Activated CD4-positive, alpha-beta T cell treated with anti-CD3 and anti-CD28 coated beads, Interleukin-2, amount 10 ng/mL, durations not matched to agents 24 days and 14 days (primary cell): ENCODE measurements at regions of chr5 and their contacts with region 1.

Region 1: DNA sequence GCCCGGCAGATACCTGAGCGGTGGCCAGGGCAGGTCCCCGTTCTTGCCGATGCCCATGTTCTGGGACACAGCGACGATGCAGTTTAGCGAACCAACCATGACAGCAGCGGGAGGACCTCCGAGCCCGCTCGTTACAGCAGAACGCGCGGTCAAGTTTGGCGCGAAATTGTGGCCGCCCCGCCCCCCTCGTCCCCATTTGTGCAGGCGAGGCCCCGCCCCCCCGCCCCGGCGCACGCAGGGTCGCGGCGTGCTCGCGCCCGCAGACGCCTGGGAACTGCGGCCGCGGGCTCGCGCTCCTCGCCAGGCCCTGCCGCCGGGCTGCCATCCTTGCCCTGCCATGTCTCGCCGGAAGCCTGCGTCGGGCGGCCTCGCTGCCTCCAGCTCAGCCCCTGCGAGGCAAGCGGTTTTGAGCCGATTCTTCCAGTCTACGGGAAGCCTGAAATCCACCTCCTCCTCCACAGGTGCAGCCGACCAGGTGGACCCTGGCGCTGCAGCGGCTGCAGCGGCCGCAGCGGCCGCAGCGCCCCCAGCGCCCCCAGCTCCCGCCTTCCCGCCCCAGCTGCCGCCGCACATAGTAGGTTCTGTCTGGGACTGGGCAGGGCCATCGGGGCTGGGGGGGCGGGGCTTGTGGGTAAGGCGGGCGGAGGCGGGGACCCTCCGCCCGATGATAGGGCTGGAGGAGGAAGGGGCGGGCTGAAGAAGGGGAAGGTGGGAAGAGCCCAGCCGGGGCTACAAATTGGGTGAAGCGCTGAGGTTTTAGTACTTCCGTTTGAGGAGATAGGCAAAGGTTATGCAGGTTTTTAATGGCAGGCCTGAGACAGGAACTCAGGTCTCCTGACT is at the starts of genes DHFR and MSH3:
- DNase-seq: peak; percentile 96
- H3K4me3 Mint-ChIP-seq: peak within 1 kb of the TSS; percentile 84
- H3K27ac Mint-ChIP-seq: peak within 1 kb of the TSS; percentile 93
- H3K4me1 Mint-ChIP-seq: peaks cover 23% of the 10 kb centered on the region
- H3K27me3 Mint-ChIP-seq: no peaks in the 10 kb centered on the region
- total RNA-seq, gene DHFR: 66.5 and 73.4 TPM in 2 replicates
- total RNA-seq, gene MSH3: 21.0 and 21.1 TPM in 2 replicates

Region 2: DNA sequence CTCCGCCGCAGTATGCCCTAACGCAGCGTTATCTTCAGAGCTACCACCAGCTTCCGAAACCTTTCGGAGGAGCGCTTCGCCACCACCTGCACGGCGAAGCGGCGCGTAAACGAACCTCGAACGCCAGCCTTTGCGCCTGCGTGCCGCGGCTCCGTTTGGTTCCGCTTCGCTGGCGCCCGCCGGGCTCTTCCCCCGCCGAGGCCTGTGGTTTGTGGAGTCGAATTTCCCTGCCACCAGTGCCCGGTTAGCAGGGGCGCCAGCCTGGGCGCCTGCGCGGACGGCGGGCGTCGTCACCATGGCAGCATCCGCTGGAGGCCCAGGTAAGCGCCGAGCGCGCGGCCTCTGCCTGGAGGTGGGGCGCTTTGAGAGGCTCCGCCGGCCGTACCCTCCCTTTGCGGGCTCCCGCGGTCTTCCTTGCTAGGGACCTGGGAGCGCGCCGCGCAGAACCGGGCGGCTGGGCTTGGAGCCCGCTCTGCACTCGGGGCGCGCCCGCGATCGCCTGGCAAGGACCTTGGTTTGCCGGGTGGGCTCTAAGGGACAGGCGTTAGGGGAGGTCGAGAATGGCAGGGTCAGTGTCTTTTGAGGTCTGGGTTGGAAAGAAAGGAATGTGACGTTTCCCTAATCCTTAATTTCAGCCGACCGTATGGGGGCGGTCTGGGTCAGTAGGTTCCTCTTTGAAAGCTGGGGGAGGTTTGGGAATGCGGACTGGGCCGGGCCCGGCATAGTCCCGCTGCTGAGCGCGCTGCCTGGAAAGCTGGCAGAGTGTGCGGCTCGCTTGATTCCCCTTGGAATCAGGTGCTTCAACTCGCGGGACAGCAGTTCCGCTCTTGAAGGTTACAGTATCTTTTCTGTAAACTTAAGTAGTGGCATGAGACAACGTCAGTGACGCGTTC is 166.5 kb before region 1 on chr5 and contains the start of gene FAM151B:
- intact Hi-C with region 1: loop called (anchors 10 kb)
- DNase-seq: peak; percentile 89
- H3K4me3 Mint-ChIP-seq: peak within 1 kb of the TSS; percentile 81
- H3K27ac Mint-ChIP-seq: no peak within 1 kb of the TSS
- H3K4me1 Mint-ChIP-seq: peaks cover 19% of the 10 kb centered on the region
- H3K27me3 Mint-ChIP-seq: peaks cover 33% of the 10 kb centered on the region
- total RNA-seq, gene FAM151B: 0.23 TPM in 1 of 2 replicates, not detected in the other

Region 3: GRCh38 chr5:80629281-80629680 is 25.3 kb before region 1 on chr5:
- intact Hi-C with region 1: no loop called
- DNase-seq: no peak
- H3K4me3 Mint-ChIP-seq: no peak overlapping the region
- H3K27ac Mint-ChIP-seq: no peak overlapping the region
- H3K4me1 Mint-ChIP-seq: peaks cover 5% of the 10 kb centered on the region
- H3K27me3 Mint-ChIP-seq: no peaks in the 10 kb centered on the region

Region 4: DNA sequence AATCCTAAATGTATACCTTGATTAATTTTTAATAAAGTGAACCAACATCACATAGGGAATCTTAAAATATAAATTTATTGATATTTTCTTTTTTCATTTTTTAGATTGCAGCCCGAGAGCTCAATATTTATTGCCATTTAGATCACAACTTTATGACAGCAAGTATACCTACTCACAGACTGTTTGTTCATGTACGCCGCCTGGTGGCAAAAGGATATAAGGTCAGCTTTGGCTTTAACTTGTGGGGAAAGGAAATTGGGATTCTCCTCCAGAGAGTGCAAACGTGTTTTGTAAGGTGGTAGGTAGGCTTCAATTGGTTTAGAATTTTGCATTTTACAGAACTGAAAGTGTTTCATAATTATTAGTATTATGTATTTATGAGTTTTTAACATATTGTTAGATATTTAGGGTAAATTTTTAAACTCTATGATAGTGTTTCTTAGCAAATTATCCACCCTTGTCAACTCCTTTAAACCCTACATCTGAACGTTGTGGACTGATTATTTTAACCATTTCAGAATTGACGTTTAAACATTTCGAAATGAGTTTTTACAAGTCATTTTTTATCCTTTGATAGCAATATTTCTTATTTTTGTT is 17.6 kb after region 1 on chr5:
- intact Hi-C with region 1: no loop called
- DNase-seq: peak; percentile 89
- H3K4me3 Mint-ChIP-seq: no peak overlapping the region
- H3K27ac Mint-ChIP-seq: no peak overlapping the region
- H3K4me1 Mint-ChIP-seq: peaks cover 10% of the 10 kb centered on the region
- H3K27me3 Mint-ChIP-seq: no peaks in the 10 kb centered on the region